ENCODE measurements at regions of chr6 and their contacts with region 1.

Region 1: DNA sequence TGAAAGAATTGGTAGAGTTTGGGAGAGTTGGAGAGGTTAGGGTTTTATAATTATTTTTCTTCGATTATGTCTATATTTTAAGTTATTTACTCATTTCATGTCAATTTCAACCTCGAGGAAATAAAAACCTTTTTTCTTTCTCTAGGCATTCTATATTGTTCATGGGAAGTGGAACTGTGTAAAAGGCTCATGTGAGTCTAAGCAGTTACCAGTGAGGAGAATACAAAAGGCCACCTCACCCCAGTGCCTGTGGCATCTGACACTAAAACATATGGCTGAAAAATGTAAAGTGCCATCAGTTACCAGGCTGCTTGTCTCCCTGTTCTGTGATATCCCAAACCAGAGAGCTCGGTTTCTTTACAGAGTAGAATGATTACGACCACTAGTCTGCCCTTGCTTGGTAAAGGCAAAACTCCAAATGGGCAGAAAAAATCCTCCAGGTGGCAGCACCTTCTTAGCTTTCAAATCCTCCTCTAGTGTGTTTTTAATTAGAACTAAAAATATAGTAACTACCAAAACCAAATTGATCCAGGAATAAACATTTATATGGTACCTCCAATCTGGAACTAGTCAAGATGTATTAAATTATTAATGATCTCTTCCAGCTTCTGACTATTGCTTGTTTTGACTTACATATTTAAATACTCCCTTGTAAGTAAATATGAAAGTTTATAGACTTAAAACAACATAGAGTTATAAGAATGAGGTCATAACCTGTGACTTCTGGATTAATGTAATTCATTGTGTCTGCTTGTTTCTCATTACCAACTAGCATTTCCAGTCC is 122.6 kb upstream of the MCHR2 start:
- DNase-seq: no peak
- H3K4me3 ChIP-seq: no peak overlapping the region
- H3K27ac ChIP-seq: no peak overlapping the region
- H3K4me1 ChIP-seq: no peaks in the 10 kb centered on the region
- H3K27me3 ChIP-seq: peaks cover 0 to 15% (median 0%) of the 10 kb centered on the region in 7 donors
- CTCF ChIP-seq: peak in 10 of 11 experiments; percentile 11 to 74 (median 53)
- POLR2A ChIP-seq: no peak

Region 2: DNA sequence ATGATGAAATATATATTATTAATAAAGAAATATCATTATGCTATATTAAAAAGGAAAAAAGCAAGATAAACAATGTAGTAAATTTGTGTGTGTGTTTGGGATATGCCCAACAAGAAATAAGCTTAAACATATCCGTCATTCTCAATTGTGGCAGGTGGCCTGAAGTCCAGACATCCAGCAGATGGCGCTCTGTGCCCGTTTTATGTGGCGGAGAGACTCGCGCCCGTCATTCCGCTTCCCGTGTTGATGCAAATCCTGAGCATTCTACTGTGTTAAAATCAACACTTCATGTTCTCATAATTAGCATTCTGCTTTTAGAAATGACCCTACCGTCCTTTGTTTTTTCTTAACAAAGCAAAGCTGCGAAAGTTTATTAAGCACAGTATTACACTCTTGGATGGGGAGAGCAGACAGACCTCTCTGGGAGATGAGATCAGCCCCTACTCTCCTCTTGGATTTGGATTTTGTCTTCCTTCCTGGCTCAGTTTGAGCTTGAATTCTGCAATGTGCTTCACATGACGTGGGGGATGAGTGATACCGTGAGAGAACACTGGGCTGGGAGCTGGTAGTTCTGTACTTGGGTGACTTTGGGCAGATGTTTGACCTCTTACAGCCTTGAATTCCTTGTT is 248.4 kb before region 1 on chr6:
- intact Hi-C with region 1: no loop called
- DNase-seq: peak; percentile 81
- H3K4me3 ChIP-seq: peak overlapping the region in 1 of 8 donors; percentile 8
- H3K27ac ChIP-seq: no peak overlapping the region
- H3K4me1 ChIP-seq: no peaks in the 10 kb centered on the region
- H3K27me3 ChIP-seq: peaks cover 0 to 39% (median 0%) of the 10 kb centered on the region in 7 donors
- CTCF ChIP-seq: peak in 10 of 11 experiments; percentile 35 to 80 (median 66)
- POLR2A ChIP-seq: no peak

Region 3: DNA sequence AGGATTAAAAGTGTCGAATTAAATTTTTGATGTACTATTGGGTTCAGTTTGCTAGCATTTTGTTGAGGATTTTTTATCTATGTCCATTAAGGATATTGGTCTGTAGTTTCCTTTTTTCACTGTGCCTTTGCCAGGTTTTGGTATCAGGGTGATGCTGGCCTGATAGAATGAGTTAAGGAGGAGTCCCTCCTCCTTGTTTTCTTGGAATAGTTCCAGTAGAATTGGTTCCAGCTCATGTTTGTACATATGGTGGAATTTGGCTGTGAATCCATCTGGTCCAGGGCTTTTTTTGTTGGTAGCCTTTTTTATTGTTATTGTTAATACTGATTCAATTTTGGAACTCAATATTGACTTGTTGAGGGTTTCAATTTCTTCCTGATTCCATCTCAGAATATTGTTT is 206.3 kb after region 1 on chr6:
- intact Hi-C with region 1: no loop called
- DNase-seq: no peak
- H3K4me3 ChIP-seq: no peak overlapping the region
- H3K27ac ChIP-seq: no peak overlapping the region
- H3K4me1 ChIP-seq: no peaks in the 10 kb centered on the region
- H3K27me3 ChIP-seq: no peaks in the 10 kb centered on the region
- CTCF ChIP-seq: no peak
- POLR2A ChIP-seq: no peak

Region 4: DNA sequence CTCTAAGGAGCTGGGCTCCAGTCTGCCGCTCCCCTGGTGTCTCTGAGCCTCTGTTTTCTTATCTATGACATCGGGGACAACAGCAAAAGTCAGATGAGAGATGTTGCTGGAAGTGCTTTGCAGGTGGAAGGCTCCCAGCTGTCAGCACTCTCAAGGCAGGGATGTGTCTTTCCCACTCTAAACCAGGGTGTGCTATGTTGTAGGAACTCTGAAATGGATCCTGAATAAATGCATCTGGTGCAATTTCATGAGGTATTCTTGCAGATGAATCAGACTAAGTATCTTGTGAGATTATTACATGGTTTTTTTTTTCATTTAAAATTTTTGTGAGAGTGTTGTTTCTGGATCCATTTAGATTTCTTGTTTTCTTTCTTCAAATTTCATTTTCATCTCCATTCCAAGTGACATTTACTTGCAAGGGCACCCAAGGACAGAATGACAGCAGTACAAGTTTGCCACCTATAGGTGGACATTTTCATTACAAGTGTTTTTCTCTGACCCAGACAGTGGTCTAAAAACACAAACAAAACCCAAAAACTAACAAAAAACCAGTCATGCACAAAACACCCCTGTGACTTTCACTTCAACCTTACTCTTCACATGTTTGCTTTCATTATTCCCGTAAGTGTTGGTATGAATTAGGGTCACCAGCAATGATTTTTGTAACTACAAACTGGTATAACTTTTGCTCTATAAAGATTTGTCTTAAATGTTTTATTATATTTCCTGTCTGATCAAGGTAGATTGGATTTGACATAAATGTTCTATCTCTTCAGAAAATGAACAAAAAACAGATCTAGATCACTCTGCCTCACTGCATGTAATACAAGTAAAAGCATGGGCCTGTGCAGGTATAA is 362.8 kb after region 1 on chr6:
- intact Hi-C with region 1: loop called (anchors 5 kb)
- DNase-seq: no peak
- H3K4me3 ChIP-seq: no peak overlapping the region
- H3K27ac ChIP-seq: no peak overlapping the region
- H3K4me1 ChIP-seq: no peaks in the 10 kb centered on the region
- H3K27me3 ChIP-seq: peaks cover 0 to 34% (median 0%) of the 10 kb centered on the region in 7 donors
- CTCF ChIP-seq: peak in 9 of 11 experiments; percentile 47 to 70 (median 56)
- POLR2A ChIP-seq: no peak

Region 5: GRCh38 chr6:100664274-100665040 is 547.9 kb after region 1 on chr6:
- intact Hi-C with region 1: loop called (anchors 10 kb)
- DNase-seq: no peak
- H3K4me3 ChIP-seq: no peak overlapping the region
- H3K27ac ChIP-seq: peak overlapping the region in 1 of 8 donors; percentile 18
- H3K4me1 ChIP-seq: peaks cover 0 to 9% (median 0%) of the 10 kb centered on the region in 6 donors
- H3K27me3 ChIP-seq: no peaks in the 10 kb centered on the region
- CTCF ChIP-seq: peak in 10 of 11 experiments; percentile 11 to 69 (median 54)
- POLR2A ChIP-seq: no peak